ENCODE measurements at regions of chr20 and their contacts with region 1.

Region 1: GRCh38 chr20:54199721-54200176 is 8.1 kb upstream of the PFDN4 start:
- DNase-seq: peak; percentile 84 to 91
- H3K4me3 ChIP-seq: no peak overlapping the region
- H3K4me3 Mint-ChIP-seq: no peak overlapping the region
- H3K27ac Mint-ChIP-seq: no peak overlapping the region
- H3K4me1 ChIP-seq: peaks cover 6% of the 10 kb centered on the region; the same call in 1 of the 2 replicates
- H3K4me1 Mint-ChIP-seq: peaks cover 11% of the 10 kb centered on the region
- H3K27me3 ChIP-seq: no peaks in the 10 kb centered on the region; the same call in 1 of the 2 replicates
- H3K27me3 Mint-ChIP-seq: peaks cover 9% of the 10 kb centered on the region
- CTCF ChIP-seq: peak; percentile 99

Region 2: DNA sequence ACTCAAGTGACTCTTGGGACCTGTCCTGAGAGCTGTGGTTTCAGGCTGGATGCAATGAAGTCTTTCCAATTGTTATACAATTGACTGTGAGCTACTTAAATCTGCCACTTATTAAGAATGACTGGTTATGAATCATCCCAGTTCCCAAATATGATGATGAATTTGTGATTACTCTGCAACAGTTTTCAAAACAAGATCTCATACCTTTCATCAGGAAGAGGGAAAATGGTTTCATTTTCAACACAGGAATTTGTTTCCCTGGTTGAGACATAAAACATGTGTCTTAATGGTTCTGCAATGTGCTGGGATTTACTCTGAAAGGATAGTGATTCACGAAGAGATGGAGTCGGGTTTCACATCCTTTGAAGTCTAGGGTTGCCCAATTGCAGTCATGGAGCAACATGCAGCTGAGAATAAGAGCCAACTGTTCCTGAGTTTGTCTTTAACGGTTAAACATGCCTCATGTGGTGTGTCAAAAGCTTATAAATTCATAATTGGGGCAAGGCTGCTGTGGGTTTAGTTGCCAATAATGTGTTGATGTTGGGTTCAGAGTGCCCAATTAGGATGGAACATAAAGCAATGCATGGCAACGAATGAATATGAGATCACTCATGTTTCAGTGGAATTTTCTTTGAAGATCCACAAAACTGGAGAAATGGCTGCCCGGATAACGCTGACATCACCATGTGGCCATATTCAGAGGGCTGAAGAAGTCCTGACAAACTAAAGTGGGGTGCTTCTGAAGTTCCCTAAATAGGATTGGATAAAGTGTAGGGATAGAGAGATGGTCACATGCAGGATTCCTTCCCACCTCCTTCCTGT is 66.9 kb before region 1 on chr20:
- CTCF ChIA-PET with region 1: no interaction called
- POLR2A ChIA-PET with region 1: no interaction called
- intact Hi-C with region 1: loop called (anchors 2 kb)
- DNase-seq: peak; percentile 65 to 81
- H3K4me3 ChIP-seq: no peak overlapping the region
- H3K4me3 Mint-ChIP-seq: no peak overlapping the region
- H3K27ac Mint-ChIP-seq: no peak overlapping the region
- H3K4me1 ChIP-seq: peaks cover 20% of the 10 kb centered on the region
- H3K4me1 Mint-ChIP-seq: peaks cover 6% of the 10 kb centered on the region
- H3K27me3 ChIP-seq: no peaks in the 10 kb centered on the region
- H3K27me3 Mint-ChIP-seq: peaks cover 2% of the 10 kb centered on the region
- CTCF ChIP-seq: no peak

Region 3: DNA sequence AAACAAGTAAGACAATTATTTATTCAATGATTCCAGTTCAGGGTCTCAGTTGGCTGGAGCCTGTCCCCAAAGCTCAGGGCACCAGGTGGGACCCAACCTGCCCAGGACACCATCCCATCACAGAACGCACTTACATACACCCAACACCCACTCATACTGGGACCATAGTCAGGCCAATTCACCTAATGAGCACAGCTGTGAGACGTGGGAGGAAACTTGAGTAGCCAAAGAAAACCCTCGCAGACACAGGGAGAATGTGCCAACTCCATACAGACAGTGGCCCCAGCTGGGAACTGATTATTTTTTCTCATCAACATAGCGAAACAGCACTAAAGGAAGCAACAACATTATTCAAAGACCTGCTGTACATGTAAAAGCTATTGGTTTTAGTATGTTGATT is 217.0 kb after region 1 on chr20:
- CTCF ChIA-PET with region 1: no interaction called
- POLR2A ChIA-PET with region 1: no interaction called
- intact Hi-C with region 1: no loop called
- DNase-seq: no peak
- H3K4me3 ChIP-seq: no peak overlapping the region
- H3K4me3 Mint-ChIP-seq: no peak overlapping the region
- H3K27ac Mint-ChIP-seq: no peak overlapping the region
- H3K4me1 ChIP-seq: no peaks in the 10 kb centered on the region
- H3K4me1 Mint-ChIP-seq: no peaks in the 10 kb centered on the region
- H3K27me3 ChIP-seq: peaks cover 2% of the 10 kb centered on the region; the same call in 1 of the 2 replicates
- H3K27me3 Mint-ChIP-seq: peaks cover 22% of the 10 kb centered on the region
- CTCF ChIP-seq: no peak

Region 4: DNA sequence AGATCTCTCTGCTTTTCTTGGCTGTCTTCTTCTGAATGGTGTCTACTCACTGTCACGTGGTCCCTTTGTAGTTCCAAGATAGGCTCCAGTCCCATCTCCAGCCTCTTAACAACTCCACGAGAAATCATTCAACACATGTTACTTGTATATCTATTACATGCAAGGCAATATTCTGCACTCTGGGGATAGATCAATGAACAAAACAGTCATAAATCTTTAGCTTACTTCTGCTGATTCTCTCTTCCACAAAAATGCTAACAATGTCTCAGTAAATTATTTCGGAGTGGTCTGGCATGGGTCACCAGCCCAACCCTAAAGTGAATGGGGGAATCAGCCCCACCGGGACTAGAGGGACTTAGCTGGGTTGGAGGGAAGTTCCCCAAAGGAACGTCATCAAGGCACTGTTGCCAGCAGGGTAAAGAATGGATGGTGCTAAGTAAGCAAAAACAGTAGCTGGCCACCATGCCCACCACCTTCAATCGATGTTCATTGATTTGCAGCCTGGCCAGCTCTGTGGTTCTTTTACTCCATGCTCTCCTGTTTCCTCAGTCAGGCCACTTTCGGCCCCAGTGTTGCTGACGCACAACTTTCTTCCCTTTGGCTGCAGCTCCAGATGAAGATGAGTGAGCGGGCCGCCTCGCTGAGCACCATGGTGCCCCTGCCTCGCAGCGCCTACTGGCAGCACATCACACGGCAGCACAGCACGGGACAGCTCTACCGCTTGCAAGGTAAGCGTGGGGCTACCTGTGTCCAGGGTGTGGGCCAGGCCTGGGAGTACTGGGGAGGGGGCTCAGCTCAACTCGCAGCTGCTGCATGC is 443.3 kb after region 1 on chr20:
- CTCF ChIA-PET with region 1: no interaction called
- POLR2A ChIA-PET with region 1: no interaction called
- intact Hi-C with region 1: no loop called
- DNase-seq: no peak
- H3K4me3 ChIP-seq: no peak overlapping the region
- H3K4me3 Mint-ChIP-seq: no peak overlapping the region
- H3K27ac Mint-ChIP-seq: no peak overlapping the region
- H3K4me1 ChIP-seq: no peaks in the 10 kb centered on the region
- H3K4me1 Mint-ChIP-seq: no peaks in the 10 kb centered on the region
- H3K27me3 ChIP-seq: no peaks in the 10 kb centered on the region
- H3K27me3 Mint-ChIP-seq: peaks cover 5% of the 10 kb centered on the region
- CTCF ChIP-seq: no peak

Measured in Caco-2 (cell line).